ENCODE measurements at regions of chr1 and their contacts with region 1.

Region 1: GRCh38 chr1:161098210-161099068 is at the start of gene KLHDC9:
- DNase-seq: peak; percentile 84
- ATAC-seq: peak; percentile 82
- H3K4me3 Mint-ChIP-seq: peak within 1 kb of the TSS; percentile 71
- H3K27ac Mint-ChIP-seq: peak within 1 kb of the TSS; percentile 73
- H3K4me1 Mint-ChIP-seq: peaks cover 34% of the 10 kb centered on the region
- H3K27me3 Mint-ChIP-seq: no peaks in the 10 kb centered on the region
- total RNA-seq, gene KLHDC9: 0.39 to 0.50 TPM

Region 2: DNA sequence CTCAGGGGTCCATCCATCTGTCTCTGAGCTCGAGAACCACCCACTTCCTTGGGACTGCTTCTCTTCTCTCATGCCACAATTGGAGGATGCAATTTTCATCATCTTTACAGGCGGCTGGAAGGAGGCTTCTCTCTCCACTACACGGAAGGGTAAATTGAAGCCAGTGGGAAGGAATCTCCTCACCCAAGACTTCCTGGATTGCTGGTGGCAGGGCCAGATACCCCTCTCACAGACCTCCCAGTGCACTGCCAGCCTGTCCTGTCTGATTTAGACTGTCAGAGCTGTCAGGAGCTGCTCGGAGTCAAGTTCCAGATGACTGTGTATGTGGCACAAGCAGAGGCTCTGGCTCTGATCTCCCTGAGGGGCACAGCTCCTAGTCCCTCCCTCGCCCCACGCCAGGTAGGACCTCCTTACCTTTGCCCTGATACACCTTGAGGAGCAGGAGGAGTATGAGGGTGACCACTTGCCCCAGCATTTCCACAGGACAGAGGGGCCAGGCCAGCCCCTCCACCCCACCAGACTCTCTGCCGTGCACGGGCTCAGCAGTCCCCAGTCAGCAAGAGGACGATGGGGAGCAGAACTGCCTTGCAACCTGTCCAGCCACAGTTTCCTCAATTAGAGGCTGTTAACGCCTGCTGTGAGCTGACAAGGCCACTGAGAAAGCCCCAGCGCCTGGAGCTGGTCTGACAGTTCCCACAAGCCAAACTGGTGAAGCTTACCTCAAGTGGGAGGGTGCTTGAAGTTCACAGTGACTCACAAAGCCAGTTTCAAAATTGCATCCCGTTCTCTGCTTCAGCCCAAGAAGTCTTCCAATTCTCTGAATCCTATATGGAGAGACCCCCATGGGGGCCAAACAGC is 236.0 kb before region 1 on chr1 and contains the start of gene CD244:
- CTCF ChIA-PET with region 1: no interaction called
- POLR2A ChIA-PET with region 1: no interaction called
- intact Hi-C with region 1: no loop called
- DNase-seq: peak; percentile 79
- ATAC-seq: peak; percentile 98
- H3K4me3 Mint-ChIP-seq: no peak within 1 kb of the TSS
- H3K27ac Mint-ChIP-seq: no peak within 1 kb of the TSS
- H3K4me1 Mint-ChIP-seq: peaks cover 19% of the 10 kb centered on the region
- H3K27me3 Mint-ChIP-seq: no peaks in the 10 kb centered on the region
- total RNA-seq, gene CD244: 0.14 to 0.25 TPM

Region 3: DNA sequence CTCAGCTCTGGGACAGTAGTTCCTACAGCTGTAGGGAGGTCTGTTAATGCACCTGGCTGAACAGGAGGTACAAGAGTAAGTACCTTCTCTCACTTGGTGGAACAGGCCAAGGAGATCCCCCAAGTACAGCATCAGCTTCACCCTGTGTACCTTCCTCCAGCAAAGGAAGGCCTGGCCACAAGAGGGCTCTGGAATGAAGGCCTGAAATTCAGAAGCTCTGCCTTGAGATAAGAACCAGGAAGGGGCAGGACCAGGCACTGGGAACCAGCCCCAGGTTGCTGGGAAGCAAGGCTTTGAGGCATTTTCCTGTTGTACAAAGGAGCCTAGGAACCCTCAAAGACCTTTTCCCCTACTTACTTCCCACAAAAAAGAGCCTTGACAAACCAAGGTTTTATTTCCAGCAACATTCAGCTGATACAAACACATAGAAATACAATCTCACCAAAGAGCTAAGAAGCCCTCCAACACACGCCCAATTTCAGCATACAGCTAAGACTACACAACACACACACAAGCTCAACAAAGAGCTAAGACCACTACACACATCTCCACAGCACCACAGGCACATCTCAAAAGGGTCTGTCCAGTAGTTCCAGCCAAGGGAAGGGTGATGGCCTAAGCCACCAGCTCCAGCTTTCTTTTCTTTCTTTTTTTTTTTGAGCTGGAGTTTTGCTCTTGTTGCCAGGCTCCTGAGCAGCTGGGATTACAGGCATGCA is 101.0 kb before region 1 on chr1:
- CTCF ChIA-PET with region 1: interaction called, 39 read pairs
- POLR2A ChIA-PET with region 1: no interaction called
- intact Hi-C with region 1: loop called (anchors 1 to 2 kb)
- DNase-seq: peak; percentile 71
- ATAC-seq: peak; percentile 81
- H3K4me3 Mint-ChIP-seq: no peak overlapping the region
- H3K27ac Mint-ChIP-seq: peak overlapping the region; percentile 58
- H3K4me1 Mint-ChIP-seq: peaks cover 18% of the 10 kb centered on the region
- H3K27me3 Mint-ChIP-seq: no peaks in the 10 kb centered on the region

Region 4: GRCh38 chr1:161045750-161046571 is 52.5 kb before region 1 on chr1 and contains the start of gene USF1:
- CTCF ChIA-PET with region 1: interaction called, 40 read pairs
- POLR2A ChIA-PET with region 1: interaction called, 3 read pairs
- intact Hi-C with region 1: loop called (anchors 1 kb)
- DNase-seq: peak; percentile 96
- ATAC-seq: peak; percentile 86
- H3K4me3 Mint-ChIP-seq: peak within 1 kb of the TSS; percentile 81
- H3K27ac Mint-ChIP-seq: peak within 1 kb of the TSS; percentile 99
- H3K4me1 Mint-ChIP-seq: peaks cover 32% of the 10 kb centered on the region
- H3K27me3 Mint-ChIP-seq: no peaks in the 10 kb centered on the region
- total RNA-seq, gene USF1: 34.5 to 42.8 TPM

Region 5: DNA sequence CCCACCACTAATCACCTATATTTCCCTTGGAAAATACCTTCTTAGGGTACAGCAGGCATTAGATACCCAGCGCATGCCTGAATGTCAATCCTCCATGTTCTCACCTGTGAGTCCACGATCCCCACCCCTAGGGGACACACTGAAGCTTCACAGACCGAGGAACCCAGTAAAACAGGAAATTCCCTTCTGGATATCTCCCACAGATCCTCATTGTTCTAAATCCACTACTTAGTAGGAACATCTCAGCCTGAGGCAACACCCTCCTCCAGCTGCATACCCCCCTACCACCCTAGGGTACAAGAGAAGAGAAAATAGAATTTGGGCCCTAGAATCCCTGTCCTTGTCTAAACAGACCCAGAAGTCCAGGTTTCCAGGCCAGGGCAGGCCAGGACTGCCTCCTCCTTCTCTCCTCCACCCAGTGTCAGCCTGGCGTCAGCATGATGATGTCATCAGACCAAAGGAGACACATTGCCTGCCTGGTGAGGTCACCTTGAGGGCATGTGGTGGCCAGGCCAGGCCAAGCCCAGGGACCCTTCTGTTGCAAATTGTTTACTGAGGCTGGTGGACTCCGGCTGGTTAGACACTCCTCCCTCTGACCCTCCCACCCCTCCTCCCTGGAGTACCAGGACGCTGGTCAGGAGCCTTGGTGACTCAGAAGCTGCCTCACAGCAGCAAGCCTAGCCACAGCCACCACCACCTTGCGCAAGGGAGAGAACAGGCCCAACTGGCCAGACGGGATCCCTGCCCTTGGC is 15.3 kb before region 1 on chr1:
- CTCF ChIA-PET with region 1: interaction called, 21 read pairs
- POLR2A ChIA-PET with region 1: no interaction called
- intact Hi-C with region 1: no loop called
- DNase-seq: no peak
- ATAC-seq: peak; percentile 67
- H3K4me3 Mint-ChIP-seq: no peak overlapping the region
- H3K27ac Mint-ChIP-seq: no peak overlapping the region
- H3K4me1 Mint-ChIP-seq: no peaks in the 10 kb centered on the region
- H3K27me3 Mint-ChIP-seq: peaks cover 2% of the 10 kb centered on the region

Region 6: GRCh38 chr1:161165742-161166668 is 67.6 kb after region 1 on chr1 and contains the start of gene PPOX:
- CTCF ChIA-PET with region 1: interaction called, 11 read pairs
- POLR2A ChIA-PET with region 1: interaction called, 3 read pairs
- intact Hi-C with region 1: no loop called
- DNase-seq: peak; percentile 96
- ATAC-seq: peak; percentile 97
- H3K4me3 Mint-ChIP-seq: peak within 1 kb of the TSS; percentile 87
- H3K27ac Mint-ChIP-seq: peak within 1 kb of the TSS; percentile 90
- H3K4me1 Mint-ChIP-seq: peaks cover 44% of the 10 kb centered on the region
- H3K27me3 Mint-ChIP-seq: no peaks in the 10 kb centered on the region
- total RNA-seq, gene PPOX: 21.5 to 28.8 TPM

Region 7: GRCh38 chr1:161244888-161245287 is 146.4 kb after region 1 on chr1:
- CTCF ChIA-PET with region 1: no interaction called
- POLR2A ChIA-PET with region 1: no interaction called
- intact Hi-C with region 1: no loop called
- DNase-seq: no peak
- ATAC-seq: no peak
- H3K4me3 Mint-ChIP-seq: no peak overlapping the region
- H3K27ac Mint-ChIP-seq: no peak overlapping the region
- H3K4me1 Mint-ChIP-seq: no peaks in the 10 kb centered on the region
- H3K27me3 Mint-ChIP-seq: peaks cover 9% of the 10 kb centered on the region